ENCODE measurements at regions of chr4 and their contacts with region 1.

Region 1: DNA sequence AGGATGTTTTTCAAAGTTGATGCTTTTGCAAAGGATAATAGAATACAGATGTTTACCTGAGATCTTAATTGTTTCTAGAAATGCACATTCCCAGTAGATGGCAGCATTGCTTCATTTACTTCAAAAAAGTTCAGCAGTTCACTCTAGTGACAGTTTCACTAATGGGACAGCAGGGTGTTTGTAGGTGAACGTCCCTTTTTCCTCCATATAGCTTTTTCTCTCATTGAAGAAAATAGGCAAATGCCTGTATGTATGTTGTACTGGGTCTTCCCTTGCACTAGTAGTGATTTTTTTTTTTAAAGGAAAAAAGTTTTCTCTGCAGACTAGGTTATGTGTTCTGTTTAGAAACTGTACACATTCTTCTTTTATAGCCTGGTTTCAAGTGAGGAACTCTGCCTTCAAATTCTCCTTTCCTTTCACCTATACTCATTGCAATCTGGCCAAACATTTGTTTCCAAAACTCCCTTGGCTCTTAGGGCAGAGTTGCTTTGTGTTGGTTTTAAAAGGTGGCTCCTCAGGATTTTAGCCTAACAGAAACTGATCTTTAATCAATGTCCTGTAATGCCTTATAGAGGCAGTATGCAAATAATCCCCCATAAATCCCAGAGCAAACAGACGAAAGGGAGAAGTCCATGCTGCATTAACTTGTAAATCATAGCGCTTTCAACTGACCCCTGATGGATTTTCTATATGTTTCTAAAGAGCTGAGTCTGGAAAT is 86.3 kb downstream of the EGF start:
- DNase-seq: peak in 6 of 14 experiments; percentile 1 to 84 (median 56)
- ATAC-seq: peak; percentile 67
- H3K4me3 ChIP-seq: no peak overlapping the region
- H3K4me3 Mint-ChIP-seq: no peak overlapping the region
- H3K27ac ChIP-seq: no peak overlapping the region
- H3K27ac Mint-ChIP-seq: no peak overlapping the region
- H3K4me1 ChIP-seq: no peaks in the 10 kb centered on the region
- H3K4me1 Mint-ChIP-seq: no peaks in the 10 kb centered on the region
- H3K27me3 ChIP-seq: peaks cover 0 to 6% of the 10 kb centered on the region in 2 experiments
- H3K27me3 Mint-ChIP-seq: peaks cover 21% of the 10 kb centered on the region
- CTCF ChIP-seq: peak; percentile 92

Region 2: DNA sequence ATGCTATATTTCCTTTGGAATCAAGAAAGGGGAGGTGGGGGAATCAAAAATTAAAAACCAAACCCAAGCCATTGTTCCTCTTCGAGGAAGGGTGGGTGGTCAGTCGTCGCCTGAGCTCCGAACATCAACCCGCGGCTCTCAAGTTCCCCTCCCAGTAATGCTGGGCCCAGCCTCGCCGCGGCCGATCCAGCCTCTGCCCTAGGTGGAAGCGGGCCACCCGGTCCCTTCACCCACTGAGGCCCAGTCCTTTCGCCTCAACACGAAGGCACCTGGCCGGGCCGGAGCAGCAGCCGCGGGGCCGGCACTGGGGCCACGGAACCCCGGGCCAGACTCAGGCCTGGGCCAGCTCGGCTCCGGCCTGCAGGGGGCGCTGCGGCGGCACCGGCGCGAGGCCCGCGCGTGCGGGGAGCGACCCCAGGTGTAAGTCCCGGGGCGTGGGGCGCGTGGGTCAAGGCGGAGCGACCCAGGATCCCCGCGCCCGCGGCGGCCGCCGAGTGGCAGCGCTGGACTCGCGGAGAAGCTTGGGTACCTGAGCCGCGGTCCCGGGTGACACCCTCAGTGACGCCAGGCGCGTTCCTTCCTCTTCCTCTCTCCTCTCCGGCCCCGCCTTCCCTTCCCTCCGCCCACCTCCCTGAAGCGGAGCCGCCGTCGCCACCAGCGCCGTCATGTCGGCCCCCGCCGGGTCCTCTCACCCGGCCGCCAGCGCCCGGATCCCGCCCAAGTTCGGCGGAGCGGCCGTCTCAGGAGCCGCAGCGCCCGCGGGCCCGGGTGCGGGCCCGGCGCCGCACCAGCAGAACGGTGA is 565.6 kb before region 1 on chr4 and contains the start of gene SEC24B:
- CTCF ChIA-PET with region 1: no interaction called
- POLR2A ChIA-PET with region 1: no interaction called
- intact Hi-C with region 1: no loop called
- DNase-seq: peak; percentile 78 to 96 (median 88)
- ATAC-seq: peak; percentile 87
- H3K4me3 ChIP-seq: peak within 1 kb of the TSS; percentile 96
- H3K4me3 Mint-ChIP-seq: peak within 1 kb of the TSS; percentile 96
- H3K27ac ChIP-seq: peak within 1 kb of the TSS; percentile 78 to 89
- H3K27ac Mint-ChIP-seq: peak within 1 kb of the TSS; percentile 95
- H3K4me1 ChIP-seq: peaks cover 39% of the 10 kb centered on the region
- H3K4me1 Mint-ChIP-seq: peaks cover 58% of the 10 kb centered on the region
- H3K27me3 ChIP-seq: no peaks in the 10 kb centered on the region
- H3K27me3 Mint-ChIP-seq: no peaks in the 10 kb centered on the region
- CTCF ChIP-seq: peak; percentile 87
- total RNA-seq, gene SEC24B: 41.5 to 45.9 TPM

Region 3: GRCh38 chr4:109977854-109978501 is 21.0 kb before region 1 on chr4:
- CTCF ChIA-PET with region 1: no interaction called
- POLR2A ChIA-PET with region 1: no interaction called
- intact Hi-C with region 1: no loop called
- DNase-seq: peak in 3 of 14 experiments; percentile 42 to 43 (median 43)
- ATAC-seq: no peak
- H3K4me3 ChIP-seq: no peak overlapping the region
- H3K4me3 Mint-ChIP-seq: no peak overlapping the region
- H3K27ac ChIP-seq: no peak overlapping the region
- H3K27ac Mint-ChIP-seq: no peak overlapping the region
- H3K4me1 ChIP-seq: no peaks in the 10 kb centered on the region
- H3K4me1 Mint-ChIP-seq: no peaks in the 10 kb centered on the region
- H3K27me3 ChIP-seq: peaks cover 3 to 20% of the 10 kb centered on the region in 2 experiments
- H3K27me3 Mint-ChIP-seq: peaks cover 25% of the 10 kb centered on the region
- CTCF ChIP-seq: peak; percentile 73

Region 4: GRCh38 chr4:110059556-110060191 is 60.6 kb after region 1 on chr4:
- CTCF ChIA-PET with region 1: no interaction called
- POLR2A ChIA-PET with region 1: no interaction called
- intact Hi-C with region 1: no loop called
- DNase-seq: peak in 3 of 14 experiments; percentile 11 to 77 (median 24)
- ATAC-seq: peak; percentile 34
- H3K4me3 ChIP-seq: peak overlapping the region; percentile 30
- H3K4me3 Mint-ChIP-seq: peak overlapping the region; percentile 16
- H3K27ac ChIP-seq: peak overlapping the region in 1 of 2 donors; percentile 50
- H3K27ac Mint-ChIP-seq: peak overlapping the region; percentile 32
- H3K4me1 ChIP-seq: peaks cover 11% of the 10 kb centered on the region
- H3K4me1 Mint-ChIP-seq: peaks cover 26% of the 10 kb centered on the region
- H3K27me3 ChIP-seq: no peaks in the 10 kb centered on the region
- H3K27me3 Mint-ChIP-seq: no peaks in the 10 kb centered on the region
- CTCF ChIP-seq: no peak

Region 5: GRCh38 chr4:111283061-111283677 is 1284.1 kb after region 1 on chr4:
- CTCF ChIA-PET with region 1: no interaction called
- POLR2A ChIA-PET with region 1: no interaction called
- intact Hi-C with region 1: loop called (anchors 5 to 10 kb)
- DNase-seq: peak in 6 of 14 experiments; percentile 0 to 37 (median 22)
- ATAC-seq: no peak
- H3K4me3 ChIP-seq: no peak overlapping the region
- H3K4me3 Mint-ChIP-seq: no peak overlapping the region
- H3K27ac ChIP-seq: no peak overlapping the region
- H3K27ac Mint-ChIP-seq: no peak overlapping the region
- H3K4me1 ChIP-seq: no peaks in the 10 kb centered on the region
- H3K4me1 Mint-ChIP-seq: no peaks in the 10 kb centered on the region
- H3K27me3 ChIP-seq: no peaks in the 10 kb centered on the region
- H3K27me3 Mint-ChIP-seq: no peaks in the 10 kb centered on the region
- CTCF ChIP-seq: peak; percentile 44

Measured in CD4-positive, alpha-beta T cell (primary cell).